Heart left ventricle (tissue), 16 donors: ENCODE measurements at regions of chr11 and their contacts with region 1.

Region 1: DNA sequence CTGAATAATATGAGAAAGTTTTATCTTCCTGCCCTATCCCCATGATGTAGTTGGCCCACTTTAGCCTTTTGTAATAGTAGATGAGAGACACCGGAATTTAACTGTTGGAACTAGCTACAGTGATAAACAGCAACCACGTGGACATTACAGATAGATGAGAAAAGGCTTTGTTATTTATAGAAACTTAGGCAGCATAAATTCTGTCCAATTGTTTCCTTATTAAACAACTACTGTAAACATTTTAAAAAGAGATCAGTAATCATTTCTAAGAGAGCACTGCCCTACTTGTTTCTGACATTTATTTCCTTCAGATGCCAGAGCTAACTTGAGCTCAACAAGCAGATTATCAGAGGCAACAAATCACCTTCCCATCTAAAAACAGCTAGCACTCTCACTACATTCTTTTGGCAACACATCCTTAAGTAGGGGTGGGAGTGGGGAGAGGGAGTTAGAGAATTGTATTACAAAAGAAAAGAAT is 63.1 kb downstream of the SOX6 start:
- DNase-seq: no peak
- ATAC-seq: peak; percentile 86 to 94 (median 89)
- H3K4me3 ChIP-seq: no peak overlapping the region
- H3K27ac ChIP-seq: peak overlapping the region; percentile 37 to 87 (median 66)
- H3K4me1 ChIP-seq: peaks cover 0 to 34% (median 12%) of the 10 kb centered on the region in 12 donors
- H3K27me3 ChIP-seq: no peaks in the 10 kb centered on the region
- CTCF ChIP-seq: no peak
- POLR2A ChIP-seq: no peak

Region 2: DNA sequence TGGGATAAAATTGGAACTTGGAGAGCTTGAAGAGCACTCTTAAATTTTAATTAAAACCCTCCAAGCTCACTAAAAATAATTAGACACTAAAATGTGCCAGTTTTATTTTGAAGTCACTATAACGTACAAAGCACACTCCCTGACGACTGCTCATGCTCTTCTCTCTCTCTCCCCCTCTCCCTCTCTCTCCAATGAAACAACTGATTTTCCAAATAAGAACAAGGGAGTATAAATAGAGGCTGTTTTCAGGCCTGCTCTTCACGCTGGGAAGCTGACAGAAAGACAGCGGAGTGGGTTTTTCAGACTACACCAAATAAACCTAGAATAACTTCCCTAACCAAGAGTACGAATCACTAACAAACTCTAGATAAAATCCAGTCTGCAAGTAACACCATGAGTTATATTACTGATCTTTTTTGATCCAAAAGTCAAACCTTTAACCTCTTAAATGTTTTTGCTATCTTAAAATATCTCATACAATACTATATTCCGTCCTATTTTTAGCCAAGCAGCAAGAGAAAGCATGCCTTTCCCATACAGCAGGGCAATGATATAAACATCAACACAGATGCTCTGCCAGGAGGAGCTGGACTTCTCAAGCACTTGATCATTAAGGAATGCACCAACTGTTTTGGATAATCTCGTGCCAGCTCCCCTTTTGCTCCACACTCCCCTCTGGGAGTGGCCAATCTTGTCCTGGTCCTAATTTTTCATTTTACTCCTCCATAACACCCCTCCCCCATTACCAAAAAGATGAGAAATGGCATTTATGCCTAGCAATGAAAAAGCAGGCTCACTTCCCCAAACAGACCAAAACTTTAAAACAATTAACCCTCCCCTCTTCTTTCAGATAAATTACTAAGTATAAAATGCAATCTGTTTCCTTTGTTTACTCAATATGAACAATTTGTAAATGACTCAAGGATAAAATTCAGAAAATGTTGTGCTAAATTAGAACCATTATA is 53.8 kb before region 1 on chr11:
- intact Hi-C with region 1: loop called in 1 of 10 experiments (anchors 5 kb)
- DNase-seq: no peak
- ATAC-seq: peak; percentile 71 to 88 (median 76)
- H3K4me3 ChIP-seq: peak overlapping the region in 8 of 12 donors; percentile 5 to 22 (median 17)
- H3K27ac ChIP-seq: peak overlapping the region; percentile 35 to 83 (median 59)
- H3K4me1 ChIP-seq: peaks cover 0 to 51% (median 17%) of the 10 kb centered on the region in 12 donors
- H3K27me3 ChIP-seq: no peaks in the 10 kb centered on the region
- CTCF ChIP-seq: no peak
- POLR2A ChIP-seq: no peak